Sigmoid colon (tissue), 7 donors: ENCODE measurements at regions of chr2 and their contacts with region 1.

Region 1: DNA sequence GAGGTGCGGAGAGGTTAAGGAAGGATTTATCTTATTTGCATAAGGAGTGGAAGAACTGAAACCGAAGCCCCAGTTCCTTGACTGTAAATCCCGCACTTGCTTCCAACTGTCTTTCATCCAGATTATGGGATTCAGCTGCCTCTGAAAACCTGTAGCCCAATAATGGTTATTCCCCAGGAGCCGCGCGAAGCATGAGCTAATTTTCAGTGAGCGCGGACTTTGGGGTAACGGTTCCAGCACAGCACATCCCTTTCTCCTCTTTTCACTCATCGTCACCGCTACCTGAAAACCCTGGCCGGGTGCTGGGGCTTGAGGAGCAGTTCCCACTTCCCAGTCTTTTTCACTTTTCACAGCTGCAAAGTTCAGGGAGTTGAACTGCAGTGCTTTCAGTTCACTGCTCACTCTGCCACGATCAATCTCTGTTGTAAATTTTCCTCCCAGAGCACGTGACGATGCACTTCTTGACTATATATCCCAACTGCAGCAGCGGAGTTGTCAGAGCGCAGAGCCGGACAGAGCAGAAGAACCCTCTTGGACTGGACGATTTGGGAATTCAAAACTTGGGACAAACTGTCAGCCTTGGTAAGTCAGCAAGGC is at the start of gene KCNE4:
- DNase-seq: peak; percentile 81
- H3K4me3 ChIP-seq: peak within 1 kb of the TSS; percentile 33 to 67 (median 54)
- H3K27ac ChIP-seq: peak within 1 kb of the TSS; percentile 84 to 90 (median 90)
- H3K4me1 ChIP-seq: peaks cover 0 to 72% (median 56%) of the 10 kb centered on the region in 4 donors
- H3K27me3 ChIP-seq: no peaks in the 10 kb centered on the region
- CTCF ChIP-seq: no peak
- EP300 ChIP-seq: no peak
- POLR2A ChIP-seq: peak; percentile 51 to 79
- total RNA-seq, gene KCNE4: 5.4 to 18.7 (median 10.1) TPM

Region 2: GRCh38 chr2:221943076-221943810 is 1108.5 kb before region 1 on chr2:
- intact Hi-C with region 1: loop called (anchors 10 kb)
- DNase-seq: peak; percentile 94
- H3K4me3 ChIP-seq: no peak overlapping the region
- H3K27ac ChIP-seq: peak overlapping the region; percentile 75 to 80 (median 75)
- H3K4me1 ChIP-seq: peaks cover 0 to 43% (median 38%) of the 10 kb centered on the region in 4 donors
- H3K27me3 ChIP-seq: no peaks in the 10 kb centered on the region
- CTCF ChIP-seq: no peak
- EP300 ChIP-seq: peak; percentile 69 to 96 (median 91)
- POLR2A ChIP-seq: no peak

Region 3: GRCh38 chr2:222969491-222969890 is 82.3 kb before region 1 on chr2:
- intact Hi-C with region 1: no loop called
- DNase-seq: no peak
- H3K4me3 ChIP-seq: no peak overlapping the region
- H3K27ac ChIP-seq: no peak overlapping the region
- H3K4me1 ChIP-seq: peaks cover 0 to 8% (median 0%) of the 10 kb centered on the region in 4 donors
- H3K27me3 ChIP-seq: no peaks in the 10 kb centered on the region
- CTCF ChIP-seq: no peak
- EP300 ChIP-seq: no peak
- POLR2A ChIP-seq: no peak

Region 4: DNA sequence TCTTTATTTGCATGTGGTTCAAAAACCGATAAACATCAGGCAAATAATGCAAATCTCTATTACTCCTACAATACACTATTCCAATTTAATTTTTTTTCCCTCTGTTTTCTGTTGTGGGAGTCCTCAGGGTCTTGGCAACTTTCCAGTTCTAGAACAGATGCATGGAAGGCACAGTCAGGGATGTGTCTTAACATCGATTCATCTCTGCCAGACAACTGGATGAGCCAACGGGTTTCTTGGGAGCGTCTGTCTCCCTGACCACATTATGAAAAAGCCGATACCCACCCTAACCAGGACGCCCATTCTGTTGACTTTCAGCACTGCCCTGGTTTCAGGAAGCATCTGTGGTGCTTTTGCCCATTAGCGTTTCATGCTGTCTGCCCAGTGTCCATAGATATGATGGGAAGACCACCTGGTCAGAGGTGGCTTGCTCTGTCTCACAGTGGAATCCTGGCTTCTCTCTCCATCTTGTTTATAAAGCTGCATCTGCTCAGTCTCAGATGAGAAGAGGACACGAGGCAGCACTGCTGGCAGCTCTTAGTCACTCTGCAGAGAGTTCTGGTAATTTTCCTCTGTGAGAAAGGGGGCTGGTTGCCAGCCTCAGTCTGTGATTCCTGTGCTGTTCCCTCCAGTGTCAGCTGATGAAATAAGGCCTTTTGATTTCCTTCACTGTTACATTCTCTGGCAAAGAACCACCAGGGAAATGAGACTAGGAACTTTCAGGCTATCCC is 57.7 kb before region 1 on chr2:
- intact Hi-C with region 1: loop called (anchors 1 kb)
- DNase-seq: peak; percentile 98
- H3K4me3 ChIP-seq: peak overlapping the region in 1 of 4 donors; percentile 1
- H3K27ac ChIP-seq: peak overlapping the region; percentile 65 to 86 (median 76)
- H3K4me1 ChIP-seq: peaks cover 0 to 22% (median 20%) of the 10 kb centered on the region in 4 donors
- H3K27me3 ChIP-seq: no peaks in the 10 kb centered on the region
- CTCF ChIP-seq: no peak
- EP300 ChIP-seq: peak; percentile 84 to 95 (median 92)
- POLR2A ChIP-seq: no peak

Region 5: DNA sequence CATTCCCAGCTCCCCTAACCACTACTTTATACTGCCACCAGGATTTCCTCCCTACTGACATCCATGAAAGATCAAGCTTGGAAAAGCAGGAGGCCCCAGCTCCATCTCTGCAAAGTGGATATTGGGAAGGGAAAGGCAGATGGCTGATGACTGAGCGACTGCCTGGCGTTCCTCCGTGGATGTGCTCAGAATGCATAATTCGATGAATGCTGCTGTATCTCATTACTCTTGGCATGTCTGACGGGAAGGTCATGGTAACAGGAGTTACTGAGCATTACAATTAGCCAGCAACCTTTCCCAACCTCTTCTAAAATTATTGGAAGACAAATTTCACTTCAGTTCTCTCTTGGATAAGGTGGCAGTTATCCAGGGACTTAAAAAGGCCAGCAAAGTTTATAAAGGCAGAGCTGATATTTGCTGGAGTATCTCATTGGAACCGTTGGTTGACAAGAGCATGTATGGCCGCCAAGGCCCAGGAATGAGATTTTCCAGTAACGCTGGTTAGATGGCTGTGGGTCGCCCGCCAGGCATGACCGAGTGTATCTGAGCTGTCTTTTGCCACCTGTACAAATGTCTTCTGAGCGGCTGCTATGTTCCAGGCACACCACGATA is 34.7 kb after region 1 on chr2:
- intact Hi-C with region 1: loop called (anchors 2 kb)
- DNase-seq: no peak
- H3K4me3 ChIP-seq: no peak overlapping the region
- H3K27ac ChIP-seq: peak overlapping the region in 2 of 4 donors; percentile 57 to 75
- H3K4me1 ChIP-seq: peaks cover 0 to 30% (median 25%) of the 10 kb centered on the region in 4 donors
- H3K27me3 ChIP-seq: no peaks in the 10 kb centered on the region
- CTCF ChIP-seq: no peak
- EP300 ChIP-seq: no peak
- POLR2A ChIP-seq: no peak

Region 6: DNA sequence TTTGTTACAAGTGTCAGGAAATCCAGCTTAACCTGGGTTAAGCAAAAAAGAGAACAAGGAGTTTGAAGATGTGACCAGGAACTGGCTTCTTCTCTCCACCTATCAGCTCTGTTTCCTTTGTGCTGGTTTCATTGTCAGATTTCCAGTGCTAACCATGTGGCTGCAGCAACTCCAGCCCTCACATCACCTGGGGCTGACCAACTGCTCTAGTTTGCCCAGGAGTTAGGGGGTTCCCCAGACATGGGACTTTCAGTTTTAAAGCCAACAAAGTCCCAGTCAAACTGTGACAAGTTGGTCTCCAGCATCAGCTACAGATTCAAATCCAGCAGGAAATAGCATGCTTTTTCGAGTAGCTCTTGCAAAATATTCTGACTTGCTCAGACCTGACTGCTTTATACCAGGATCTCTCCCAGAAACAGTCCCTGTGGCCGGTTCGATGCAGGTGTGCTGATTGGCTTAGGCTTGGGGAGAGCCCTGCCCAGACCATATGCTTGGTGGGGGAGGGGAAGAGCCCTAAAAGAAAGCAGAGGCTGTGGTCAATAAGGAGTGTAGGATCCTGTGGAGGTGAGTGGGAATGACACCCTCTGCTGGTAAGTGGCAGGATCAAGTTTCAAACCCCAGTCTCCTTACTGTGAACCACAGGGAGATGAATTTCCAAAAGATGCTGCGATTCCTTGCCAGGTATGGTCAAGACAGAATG is 49.7 kb after region 1 on chr2:
- intact Hi-C with region 1: loop called (anchors 2 kb)
- DNase-seq: no peak
- H3K4me3 ChIP-seq: no peak overlapping the region
- H3K27ac ChIP-seq: peak overlapping the region in 2 of 4 donors; percentile 73 to 79
- H3K4me1 ChIP-seq: peaks cover 0 to 53% (median 42%) of the 10 kb centered on the region in 4 donors
- H3K27me3 ChIP-seq: no peaks in the 10 kb centered on the region
- CTCF ChIP-seq: peak in 3 of 4 experiments; percentile 7 to 28 (median 24)
- EP300 ChIP-seq: no peak
- POLR2A ChIP-seq: no peak

Region 7: GRCh38 chr2:223363085-223363484 is 311.3 kb after region 1 on chr2:
- intact Hi-C with region 1: loop called (anchors 5 kb)
- DNase-seq: no peak
- H3K4me3 ChIP-seq: no peak overlapping the region
- H3K27ac ChIP-seq: peak overlapping the region in 2 of 4 donors; percentile 44 to 48
- H3K4me1 ChIP-seq: peaks cover 0 to 24% (median 13%) of the 10 kb centered on the region in 4 donors
- H3K27me3 ChIP-seq: no peaks in the 10 kb centered on the region
- CTCF ChIP-seq: no peak
- EP300 ChIP-seq: peak; percentile 13 to 74 (median 34)
- POLR2A ChIP-seq: no peak